Activated CD4-positive, alpha-beta memory T cell treated with anti-CD3 and anti-CD28 coated beads for 36 hours (primary cell): ENCODE measurements at regions of chr2 and their contacts with region 1.

Region 1: GRCh38 chr2:98086491-98087446 is at the start of gene VWA3B:
- DNase-seq: peak; percentile 56
- H3K4me3 Mint-ChIP-seq: peak within 1 kb of the TSS; percentile 66
- H3K27ac Mint-ChIP-seq: no peak within 1 kb of the TSS
- H3K4me1 Mint-ChIP-seq: peaks cover 23% of the 10 kb centered on the region
- H3K27me3 Mint-ChIP-seq: peaks cover 45% of the 10 kb centered on the region
- total RNA-seq, gene VWA3B: not detected

Region 2: GRCh38 chr2:97966518-97967215 is 120.1 kb before region 1 on chr2:
- CTCF ChIA-PET with region 1: no interaction called
- POLR2A ChIA-PET with region 1: no interaction called
- intact Hi-C with region 1: no loop called
- DNase-seq: no peak
- H3K4me3 Mint-ChIP-seq: no peak overlapping the region
- H3K27ac Mint-ChIP-seq: no peak overlapping the region
- H3K4me1 Mint-ChIP-seq: peaks cover 72% of the 10 kb centered on the region
- H3K27me3 Mint-ChIP-seq: no peaks in the 10 kb centered on the region

Region 3: GRCh38 chr2:97995734-97996624 is 90.8 kb before region 1 on chr2 and contains the start of gene TMEM131:
- CTCF ChIA-PET with region 1: no interaction called
- POLR2A ChIA-PET with region 1: no interaction called
- intact Hi-C with region 1: loop called (anchors 10 kb)
- DNase-seq: peak; percentile 97
- H3K4me3 Mint-ChIP-seq: peak within 1 kb of the TSS; percentile 87
- H3K27ac Mint-ChIP-seq: peak within 1 kb of the TSS; percentile 95
- H3K4me1 Mint-ChIP-seq: peaks cover 32% of the 10 kb centered on the region
- H3K27me3 Mint-ChIP-seq: no peaks in the 10 kb centered on the region
- total RNA-seq, gene TMEM131: 23.1 to 23.7 TPM

Region 4: DNA sequence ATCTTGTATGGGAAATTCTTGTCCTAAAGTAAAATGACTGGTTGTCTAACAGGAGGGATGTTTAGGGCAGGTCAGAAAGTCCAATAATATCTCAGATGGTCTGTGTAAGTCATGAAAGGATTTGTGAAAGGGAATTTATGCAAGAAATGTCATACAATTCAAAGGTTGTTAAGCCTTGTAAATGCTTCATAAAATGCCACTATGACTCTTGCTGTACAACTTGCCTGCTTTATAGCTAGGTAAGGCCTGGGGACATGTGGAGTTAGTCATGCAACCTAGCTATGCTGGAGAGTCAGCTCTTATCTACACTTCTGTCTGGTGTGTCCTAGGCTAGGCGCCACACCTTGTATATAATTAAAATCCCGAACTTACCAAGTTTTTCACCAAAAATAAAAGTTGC is 36.7 kb before region 1 on chr2:
- CTCF ChIA-PET with region 1: no interaction called
- POLR2A ChIA-PET with region 1: no interaction called
- intact Hi-C with region 1: no loop called
- DNase-seq: no peak
- H3K4me3 Mint-ChIP-seq: no peak overlapping the region
- H3K27ac Mint-ChIP-seq: no peak overlapping the region
- H3K4me1 Mint-ChIP-seq: no peaks in the 10 kb centered on the region
- H3K27me3 Mint-ChIP-seq: peaks cover 7% of the 10 kb centered on the region